Ovary (tissue), 10 donors: ENCODE measurements at regions of chr3 and their contacts with region 1.

Region 1: DNA sequence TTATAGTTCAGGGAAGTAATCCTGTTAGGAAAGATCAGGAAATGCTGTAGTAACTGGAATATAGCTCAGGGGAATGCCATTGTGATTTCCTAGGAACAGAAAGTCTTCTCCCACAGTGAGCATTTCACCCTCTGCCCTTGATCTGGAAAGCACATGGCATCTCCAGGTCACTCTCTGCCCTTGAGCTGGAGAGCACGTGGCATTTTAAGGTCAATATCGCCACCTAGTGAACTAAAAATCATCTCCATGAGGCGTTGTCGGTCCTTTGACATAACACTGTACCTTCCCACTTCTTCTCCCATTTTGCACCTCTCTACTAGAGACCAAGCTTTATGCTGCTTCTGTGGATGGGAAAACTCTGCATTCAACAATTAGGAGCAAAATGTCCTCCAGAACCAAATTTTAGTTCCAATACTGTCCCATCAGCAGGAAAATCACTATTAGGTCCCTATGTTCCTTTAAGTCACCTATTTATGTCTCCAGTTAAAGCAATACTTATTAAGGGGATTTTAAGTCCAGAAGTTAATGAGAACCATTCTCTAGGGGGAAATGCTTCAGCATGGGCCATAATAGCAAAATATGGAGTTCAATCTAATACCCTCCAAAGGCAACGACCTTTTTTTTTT is 54.7 kb upstream of the GK5 start:
- DNase-seq: peak; percentile 38 to 66 (median 45)
- H3K4me3 ChIP-seq: no peak overlapping the region
- H3K27ac ChIP-seq: peak overlapping the region in 1 of 2 donors; percentile 15
- H3K4me1 ChIP-seq: peaks cover 2% of the 10 kb centered on the region
- H3K27me3 ChIP-seq: no peaks in the 10 kb centered on the region
- CTCF ChIP-seq: peak; percentile 59 to 70 (median 61)
- EP300 ChIP-seq: no peak
- POLR2A ChIP-seq: no peak

Region 2: GRCh38 chr3:141959921-141960554 is 320.0 kb before region 1 on chr3:
- intact Hi-C with region 1: loop called in 1 of 4 experiments (anchors 10 kb)
- DNase-seq: peak in 3 of 5 donors; percentile 19 to 38 (median 37)
- H3K4me3 ChIP-seq: no peak overlapping the region
- H3K27ac ChIP-seq: peak overlapping the region; percentile 9 to 81
- H3K4me1 ChIP-seq: peaks cover 11% of the 10 kb centered on the region
- H3K27me3 ChIP-seq: no peaks in the 10 kb centered on the region
- CTCF ChIP-seq: no peak
- EP300 ChIP-seq: no peak
- POLR2A ChIP-seq: no peak

Region 3: DNA sequence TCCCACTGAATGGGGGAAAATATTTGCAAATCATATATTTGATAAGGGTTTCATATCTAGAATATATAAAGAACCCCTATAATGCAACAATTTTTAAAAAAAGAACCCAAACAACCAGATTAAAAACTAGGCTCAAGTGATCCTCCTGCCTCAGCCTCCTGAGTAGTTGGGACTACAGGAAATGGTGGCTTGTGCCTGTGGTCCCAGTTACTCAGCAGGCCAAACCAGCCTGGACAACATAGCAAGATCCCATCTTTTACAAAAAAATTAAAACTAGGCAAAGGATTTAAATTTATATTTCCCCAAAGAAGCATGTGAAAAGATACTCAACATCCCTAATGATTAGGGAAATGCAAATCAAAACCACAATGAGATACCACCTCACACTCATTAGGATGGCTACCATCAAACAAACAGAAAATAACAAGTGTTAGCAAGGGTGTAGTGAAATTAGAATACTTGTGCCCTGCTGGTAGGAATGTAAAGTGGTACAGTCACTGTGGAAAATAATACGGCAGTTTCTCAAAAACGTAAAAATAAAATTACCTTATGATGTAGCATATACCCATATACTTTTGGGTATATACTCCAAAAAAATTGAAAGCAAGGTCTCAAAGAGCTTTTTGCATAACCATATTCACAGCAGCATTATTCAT is 150.4 kb before region 1 on chr3:
- intact Hi-C with region 1: loop called in 3 of 4 experiments (anchors 5 kb)
- DNase-seq: no peak
- H3K4me3 ChIP-seq: no peak overlapping the region
- H3K27ac ChIP-seq: no peak overlapping the region
- H3K4me1 ChIP-seq: no peaks in the 10 kb centered on the region
- H3K27me3 ChIP-seq: no peaks in the 10 kb centered on the region
- CTCF ChIP-seq: no peak
- EP300 ChIP-seq: no peak
- POLR2A ChIP-seq: no peak

Region 4: GRCh38 chr3:142165194-142165593 is 114.9 kb before region 1 on chr3:
- intact Hi-C with region 1: no loop called
- DNase-seq: no peak
- H3K4me3 ChIP-seq: no peak overlapping the region
- H3K27ac ChIP-seq: no peak overlapping the region
- H3K4me1 ChIP-seq: no peaks in the 10 kb centered on the region
- H3K27me3 ChIP-seq: no peaks in the 10 kb centered on the region
- CTCF ChIP-seq: no peak
- EP300 ChIP-seq: no peak
- POLR2A ChIP-seq: no peak

Region 5: GRCh38 chr3:142226484-142226883 is 53.6 kb before region 1 on chr3:
- intact Hi-C with region 1: loop called in 1 of 4 experiments (anchors 5 kb)
- DNase-seq: no peak
- H3K4me3 ChIP-seq: no peak overlapping the region
- H3K27ac ChIP-seq: no peak overlapping the region
- H3K4me1 ChIP-seq: peaks cover 3% of the 10 kb centered on the region
- H3K27me3 ChIP-seq: no peaks in the 10 kb centered on the region
- CTCF ChIP-seq: no peak
- EP300 ChIP-seq: no peak
- POLR2A ChIP-seq: no peak

Region 6: GRCh38 chr3:142243134-142243533 is 36.9 kb before region 1 on chr3:
- intact Hi-C with region 1: no loop called
- DNase-seq: no peak
- H3K4me3 ChIP-seq: no peak overlapping the region
- H3K27ac ChIP-seq: no peak overlapping the region
- H3K4me1 ChIP-seq: no peaks in the 10 kb centered on the region
- H3K27me3 ChIP-seq: no peaks in the 10 kb centered on the region
- CTCF ChIP-seq: no peak
- EP300 ChIP-seq: no peak
- POLR2A ChIP-seq: no peak

Region 7: GRCh38 chr3:142332390-142332789 is 52.3 kb after region 1 on chr3:
- intact Hi-C with region 1: no loop called
- DNase-seq: no peak
- H3K4me3 ChIP-seq: no peak overlapping the region
- H3K27ac ChIP-seq: no peak overlapping the region
- H3K4me1 ChIP-seq: no peaks in the 10 kb centered on the region
- H3K27me3 ChIP-seq: no peaks in the 10 kb centered on the region
- CTCF ChIP-seq: no peak
- EP300 ChIP-seq: no peak
- POLR2A ChIP-seq: no peak